Right cardiac atrium (tissue), 5 donors: ENCODE measurements at regions of chr5 and their contacts with region 1.

Region 1: GRCh38 chr5:31944684-31945445 is 229.3 kb downstream of the GOLPH3 start:
- DNase-seq: no peak
- ATAC-seq: peak in 1 of 2 donors; percentile 23
- H3K4me3 ChIP-seq: no peak overlapping the region
- H3K27ac ChIP-seq: no peak overlapping the region
- H3K4me1 ChIP-seq: no peaks in the 10 kb centered on the region
- H3K27me3 ChIP-seq: no peaks in the 10 kb centered on the region

Region 2: GRCh38 chr5:31581498-31582099 is 363.3 kb before region 1 on chr5:
- intact Hi-C with region 1: no loop called
- DNase-seq: no peak
- ATAC-seq: no peak
- H3K4me3 ChIP-seq: no peak overlapping the region
- H3K27ac ChIP-seq: no peak overlapping the region
- H3K4me1 ChIP-seq: no peaks in the 10 kb centered on the region
- H3K27me3 ChIP-seq: no peaks in the 10 kb centered on the region

Region 3: GRCh38 chr5:32059768-32060530 is 115.1 kb after region 1 on chr5:
- intact Hi-C with region 1: loop called in 1 of 4 experiments (anchors 10 kb)
- DNase-seq: no peak
- ATAC-seq: no peak
- H3K4me3 ChIP-seq: no peak overlapping the region
- H3K27ac ChIP-seq: no peak overlapping the region
- H3K4me1 ChIP-seq: peaks cover 6% of the 10 kb centered on the region
- H3K27me3 ChIP-seq: no peaks in the 10 kb centered on the region